ENCODE measurements at regions of chr14 and their contacts with region 1.

Region 1: DNA sequence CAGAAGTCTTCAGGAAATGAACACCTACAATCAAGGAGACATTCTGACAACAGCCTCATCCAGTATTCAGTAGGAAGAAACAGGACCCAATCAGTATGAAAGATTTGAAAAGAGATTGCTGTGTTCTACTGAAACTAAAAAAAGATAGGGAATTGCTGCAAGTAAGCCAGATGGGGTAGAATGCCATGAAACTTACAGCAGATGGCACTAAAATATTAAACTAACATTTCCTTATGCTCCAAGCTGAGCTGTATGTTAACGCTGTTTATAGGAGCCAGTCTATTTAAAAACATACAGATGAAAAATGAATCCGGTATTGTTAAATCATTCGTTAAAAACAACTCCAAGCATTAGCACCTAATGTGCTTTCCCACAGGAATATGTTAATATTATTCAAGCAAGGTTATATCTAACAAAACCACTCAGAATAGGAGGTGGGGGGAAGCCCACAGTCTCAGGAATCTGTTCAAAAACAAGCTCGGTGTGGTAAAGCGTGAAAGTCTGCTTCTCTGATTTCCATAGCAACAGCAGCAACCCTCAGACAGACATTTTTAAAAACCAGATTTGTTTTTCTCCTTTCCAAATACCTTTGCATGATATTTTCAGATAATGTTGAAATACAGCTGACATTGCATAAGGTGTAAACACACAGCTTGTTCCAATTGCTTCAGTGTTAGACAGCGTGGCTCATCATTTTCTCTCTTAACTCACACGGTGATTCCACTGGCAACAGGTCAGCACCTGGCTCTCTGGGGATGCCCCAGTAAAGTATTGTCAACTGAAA is 131.4 kb upstream of the CCDC175 start:
- DNase-seq: peak; percentile 33
- ATAC-seq: peak; percentile 61
- H3K4me3 ChIP-seq: no peak overlapping the region
- H3K27ac ChIP-seq: no peak overlapping the region
- H3K4me1 ChIP-seq: no peaks in the 10 kb centered on the region
- H3K27me3 ChIP-seq: peaks cover 87% of the 10 kb centered on the region
- CTCF ChIP-seq: peak; percentile 18; the same call in 1 of the 2 replicates

Region 2: DNA sequence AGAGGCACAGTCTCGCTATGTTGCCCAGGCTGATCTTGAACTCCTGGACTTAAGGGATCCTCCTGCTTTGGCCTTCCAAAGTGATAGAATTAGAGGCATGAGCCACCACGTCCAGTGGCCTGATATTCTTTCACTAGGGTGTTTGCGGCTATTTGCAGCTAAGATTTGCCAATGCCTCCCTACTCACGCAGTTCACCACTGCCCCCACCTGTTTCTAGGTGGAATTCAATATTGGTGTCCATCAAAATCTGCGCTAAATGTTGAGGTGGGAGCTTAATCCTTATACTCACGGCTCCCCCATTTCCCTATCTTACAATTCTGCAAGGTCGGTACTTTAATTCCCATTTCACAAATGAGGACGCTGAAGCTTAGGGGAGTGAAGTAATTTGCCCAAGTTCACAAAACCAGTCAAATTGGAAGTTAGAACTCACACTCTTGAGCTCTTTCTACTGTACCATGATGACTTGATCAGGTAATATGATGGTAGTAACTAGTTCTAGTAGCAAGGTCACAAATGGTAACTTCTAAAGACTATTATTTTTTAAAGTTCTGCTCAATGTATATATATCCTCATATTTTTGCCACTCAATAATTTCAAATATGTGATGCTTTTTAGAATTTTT is 189.9 kb after region 1 on chr14:
- CTCF ChIA-PET with region 1: interaction called, 14 read pairs
- POLR2A ChIA-PET with region 1: no interaction called
- intact Hi-C with region 1: loop called (anchors 5 kb)
- DNase-seq: peak; percentile 87
- ATAC-seq: peak; percentile 80
- H3K4me3 ChIP-seq: no peak overlapping the region
- H3K27ac ChIP-seq: no peak overlapping the region
- H3K4me1 ChIP-seq: no peaks in the 10 kb centered on the region
- H3K27me3 ChIP-seq: peaks cover 70% of the 10 kb centered on the region
- CTCF ChIP-seq: peak; percentile 96

Region 3: GRCh38 chr14:59918824-59919569 is 211.0 kb after region 1 on chr14:
- CTCF ChIA-PET with region 1: no interaction called
- POLR2A ChIA-PET with region 1: no interaction called
- intact Hi-C with region 1: loop called (anchors 1 kb)
- DNase-seq: peak; percentile 71
- ATAC-seq: peak; percentile 80
- H3K4me3 ChIP-seq: peak overlapping the region; percentile 20; the same call in 1 of the 2 replicates
- H3K27ac ChIP-seq: no peak overlapping the region
- H3K4me1 ChIP-seq: peaks cover 5% of the 10 kb centered on the region; the same call in 1 of the 2 replicates
- H3K27me3 ChIP-seq: peaks cover 74% of the 10 kb centered on the region
- CTCF ChIP-seq: peak; percentile 94